ENCODE measurements at regions of chr2 and their contacts with region 1.

Region 1: DNA sequence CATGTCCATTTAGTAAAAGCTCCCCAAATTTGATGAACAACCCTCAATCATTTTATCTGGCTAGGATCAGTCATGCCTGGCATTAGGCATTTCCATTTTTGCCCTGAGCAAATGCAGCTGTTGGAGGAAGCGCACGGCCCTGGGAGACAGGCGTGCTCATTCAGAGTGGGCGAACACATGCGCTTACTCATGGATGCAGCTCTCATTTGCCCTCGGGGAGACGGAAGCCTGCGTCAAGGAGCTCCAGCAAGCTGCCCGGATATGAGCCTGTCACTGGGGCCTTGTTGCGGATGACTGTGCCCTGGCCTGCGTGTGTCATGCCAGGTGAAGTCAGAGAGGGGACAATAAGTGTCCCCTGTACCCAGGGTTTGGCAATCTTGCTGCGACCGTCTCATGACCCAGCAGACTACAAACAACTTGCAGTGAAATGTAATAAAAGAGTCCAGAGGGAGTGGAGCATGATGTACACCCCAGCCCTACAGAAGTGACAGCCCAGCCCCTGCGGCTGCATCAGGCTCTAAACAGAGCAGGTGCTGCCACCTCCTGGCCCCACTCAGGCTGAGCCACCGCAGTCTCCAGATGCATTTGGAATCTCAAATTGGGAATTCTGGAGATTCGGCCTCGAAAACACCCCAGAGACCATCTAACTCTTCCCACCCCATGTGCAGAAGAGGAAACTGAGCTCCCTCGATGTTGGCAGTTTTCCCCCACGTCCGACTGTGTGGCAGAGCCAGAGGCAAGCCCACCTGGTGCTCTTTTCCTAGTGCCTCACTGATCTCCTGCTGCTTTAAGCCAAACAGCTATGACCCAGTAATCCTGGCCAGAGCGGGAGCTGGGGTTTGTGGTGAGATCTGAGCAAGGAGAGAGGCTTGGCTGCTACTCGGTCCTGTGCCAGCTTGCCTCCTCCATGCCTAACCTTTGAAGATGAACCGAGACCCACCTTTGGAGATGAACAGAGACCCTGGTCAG is 105.0 kb upstream of the ALK start:
- DNase-seq: peak; percentile 95
- H3K4me3 ChIP-seq: no peak overlapping the region
- H3K27ac ChIP-seq: no peak overlapping the region
- H3K4me1 ChIP-seq: peaks cover 13% of the 10 kb centered on the region
- H3K27me3 ChIP-seq: no peaks in the 10 kb centered on the region
- CTCF ChIP-seq: peak; percentile 63 to 81

Region 2: DNA sequence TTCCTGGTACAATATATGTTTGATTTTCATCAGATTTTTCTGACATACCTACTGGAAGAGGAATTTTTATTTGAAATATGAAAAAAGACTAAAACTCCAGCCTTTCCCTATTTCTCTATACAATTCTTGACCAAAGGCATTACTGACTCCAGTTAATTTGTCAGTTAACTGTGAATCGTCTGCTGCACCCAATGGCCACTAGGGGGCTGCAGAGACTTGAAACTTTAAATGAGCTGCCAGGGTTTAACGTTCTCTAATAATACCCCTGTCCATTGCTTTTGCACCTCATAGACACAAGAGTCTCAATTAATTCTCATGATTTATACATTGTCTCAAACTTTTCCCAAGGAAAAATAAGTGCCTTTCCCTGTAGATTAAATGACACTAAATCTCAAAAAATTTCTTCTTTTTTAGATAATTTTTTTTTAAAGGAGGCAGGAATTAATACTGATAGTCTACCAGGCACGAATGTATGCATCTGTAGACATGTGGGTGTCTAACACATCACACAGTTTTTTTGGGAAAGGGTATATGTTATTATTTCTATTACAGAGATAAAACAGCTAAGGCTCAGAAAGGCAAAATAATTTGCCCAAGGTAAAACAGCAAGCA is 103.2 kb before region 1 on chr2:
- CTCF ChIA-PET with region 1: interaction called, 13 read pairs
- dilution Hi-C with region 1: no loop called
- in situ Hi-C with region 1: no loop called
- intact Hi-C with region 1: loop called (anchors 1 kb)
- DNase-seq: peak; percentile 39
- H3K4me3 ChIP-seq: no peak overlapping the region
- H3K27ac ChIP-seq: no peak overlapping the region
- H3K4me1 ChIP-seq: peaks cover 6% of the 10 kb centered on the region
- H3K27me3 ChIP-seq: peaks cover 25% of the 10 kb centered on the region
- CTCF ChIP-seq: peak; percentile 92 to 93

Region 3: DNA sequence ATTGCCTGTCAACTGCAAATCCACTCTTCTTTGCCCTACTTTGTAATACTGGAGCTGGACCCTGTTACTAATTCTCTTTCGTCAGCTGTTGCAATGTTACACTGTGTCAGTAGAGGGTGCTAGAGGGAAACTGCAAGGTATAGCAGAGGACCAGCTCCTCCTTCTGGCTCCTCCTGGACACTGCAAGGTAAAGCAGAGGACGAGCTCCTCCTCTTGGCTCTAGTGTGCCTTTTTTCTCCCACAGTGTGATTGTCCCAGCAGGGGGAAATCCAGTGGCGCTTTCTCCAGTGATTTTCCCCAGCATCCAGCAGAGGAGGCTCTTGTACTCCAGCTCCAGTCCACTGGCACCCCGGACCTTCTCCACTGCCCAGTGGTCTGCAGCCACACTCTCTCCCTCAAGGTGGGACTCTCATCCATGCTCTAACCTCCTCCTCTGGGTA is 685.3 kb after region 1 on chr2:
- CTCF ChIA-PET with region 1: no interaction called
- dilution Hi-C with region 1: no loop called
- in situ Hi-C with region 1: no loop called
- intact Hi-C with region 1: no loop called
- DNase-seq: peak; percentile 72
- H3K4me3 ChIP-seq: no peak overlapping the region
- H3K27ac ChIP-seq: no peak overlapping the region
- H3K4me1 ChIP-seq: no peaks in the 10 kb centered on the region
- H3K27me3 ChIP-seq: peaks cover 2% of the 10 kb centered on the region
- CTCF ChIP-seq: peak; percentile 100

Measured in mammary epithelial cell (primary cell).